ENCODE measurements at regions of chr12 and their contacts with region 1.

Region 1: GRCh38 chr12:119444456-119445044 is 110.0 kb downstream of the CCDC60 start:
- DNase-seq: peak; percentile 77
- ATAC-seq: peak; percentile 75
- H3K4me3 ChIP-seq: no peak overlapping the region
- H3K27ac ChIP-seq: no peak overlapping the region
- H3K4me1 ChIP-seq: no peaks in the 10 kb centered on the region
- H3K27me3 ChIP-seq: peaks cover 7% of the 10 kb centered on the region; the same call in 1 of the 2 replicates
- CTCF ChIP-seq: peak; percentile 93

Region 2: DNA sequence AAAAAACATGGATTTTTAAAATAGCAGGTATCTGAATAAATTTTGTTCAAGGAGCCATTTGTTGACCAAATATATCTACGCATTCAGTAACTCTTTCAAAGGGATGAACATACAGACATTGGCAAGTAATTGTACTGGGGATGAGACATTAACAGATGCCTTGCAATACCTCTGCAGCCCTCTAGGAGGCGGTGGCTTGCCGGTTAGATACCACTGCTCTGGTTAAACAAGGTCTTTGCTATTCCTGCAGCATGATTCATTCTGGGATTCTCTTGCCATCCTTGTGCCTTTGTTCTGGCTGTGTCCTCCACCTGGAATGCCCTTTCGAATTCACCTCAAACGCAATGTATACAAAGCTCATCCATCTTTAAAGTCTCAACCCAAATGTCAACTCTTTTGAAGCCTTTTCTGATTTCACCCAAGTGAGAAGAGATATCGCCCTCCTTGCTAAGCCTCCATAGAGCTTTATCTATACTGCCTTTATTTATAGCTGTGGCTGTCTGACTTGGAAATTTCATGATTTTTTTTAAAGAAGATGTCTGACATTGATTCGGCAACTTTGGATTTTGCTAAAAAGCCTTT is 594.2 kb before region 1 on chr12:
- CTCF ChIA-PET with region 1: no interaction called
- POLR2A ChIA-PET with region 1: no interaction called
- in situ Hi-C with region 1: no loop called
- intact Hi-C with region 1: no loop called
- DNase-seq: no peak
- ATAC-seq: no peak
- H3K4me3 ChIP-seq: no peak overlapping the region
- H3K27ac ChIP-seq: no peak overlapping the region
- H3K4me1 ChIP-seq: no peaks in the 10 kb centered on the region
- H3K27me3 ChIP-seq: no peaks in the 10 kb centered on the region; the same call in 1 of the 2 replicates
- CTCF ChIP-seq: peak; percentile 81

Region 3: GRCh38 chr12:119308708-119309456 is 135.7 kb before region 1 on chr12:
- CTCF ChIA-PET with region 1: no interaction called
- POLR2A ChIA-PET with region 1: no interaction called
- in situ Hi-C with region 1: no loop called
- intact Hi-C with region 1: no loop called
- DNase-seq: no peak
- ATAC-seq: no peak
- H3K4me3 ChIP-seq: no peak overlapping the region
- H3K27ac ChIP-seq: no peak overlapping the region
- H3K4me1 ChIP-seq: no peaks in the 10 kb centered on the region
- H3K27me3 ChIP-seq: no peaks in the 10 kb centered on the region
- CTCF ChIP-seq: no peak

Region 4: DNA sequence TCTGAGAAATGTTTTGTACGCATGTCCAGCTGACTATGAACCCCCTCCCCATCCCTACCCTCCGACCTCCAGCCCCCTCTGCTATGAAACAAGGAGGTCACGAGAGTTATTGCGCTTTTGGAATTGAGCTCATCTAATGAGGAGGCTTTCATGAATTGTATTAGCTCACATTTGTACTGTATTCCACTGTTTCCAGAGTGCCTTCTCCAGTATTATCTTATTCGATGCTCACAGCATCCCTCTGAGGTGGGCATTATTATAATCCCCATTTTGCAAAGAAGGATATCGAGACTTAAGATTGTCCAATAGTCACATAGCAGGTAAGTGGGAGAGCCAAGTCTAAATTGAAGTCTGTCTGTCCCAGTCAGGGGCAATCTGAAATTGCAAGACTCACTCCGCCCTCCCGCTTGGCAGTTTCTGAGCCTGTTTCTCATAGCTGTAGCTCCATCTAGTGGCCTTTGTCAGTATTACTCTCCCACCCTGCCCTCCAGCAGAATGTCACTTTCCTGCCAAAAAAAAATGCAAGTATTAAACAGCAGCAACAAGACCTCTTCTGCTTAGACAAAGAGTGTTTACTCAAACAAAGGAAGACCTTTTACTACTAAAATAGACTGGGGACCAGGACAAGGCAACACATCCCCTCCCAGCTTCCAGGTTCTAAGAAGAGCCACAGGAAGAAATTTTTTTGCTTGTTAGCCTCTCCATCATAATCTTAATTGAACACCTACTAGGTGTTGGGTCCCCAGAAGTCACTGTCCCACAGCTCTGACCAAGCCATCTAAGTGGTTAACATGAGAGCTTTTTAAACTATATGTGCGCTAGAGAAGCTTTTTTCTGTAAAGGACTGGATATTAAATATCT is 100.4 kb after region 1 on chr12:
- CTCF ChIA-PET with region 1: interaction called, 6 read pairs
- POLR2A ChIA-PET with region 1: interaction called, 3 read pairs
- in situ Hi-C with region 1: no loop called
- intact Hi-C with region 1: loop called (anchors 1 kb)
- DNase-seq: peak; percentile 59
- ATAC-seq: peak; percentile 93
- H3K4me3 ChIP-seq: no peak overlapping the region
- H3K27ac ChIP-seq: no peak overlapping the region
- H3K4me1 ChIP-seq: no peaks in the 10 kb centered on the region
- H3K27me3 ChIP-seq: 0 out of 2 replicates have a peak, but pooled peaks cover 4% of the 10 kb centered on the region
- CTCF ChIP-seq: peak; percentile 85

Region 5: DNA sequence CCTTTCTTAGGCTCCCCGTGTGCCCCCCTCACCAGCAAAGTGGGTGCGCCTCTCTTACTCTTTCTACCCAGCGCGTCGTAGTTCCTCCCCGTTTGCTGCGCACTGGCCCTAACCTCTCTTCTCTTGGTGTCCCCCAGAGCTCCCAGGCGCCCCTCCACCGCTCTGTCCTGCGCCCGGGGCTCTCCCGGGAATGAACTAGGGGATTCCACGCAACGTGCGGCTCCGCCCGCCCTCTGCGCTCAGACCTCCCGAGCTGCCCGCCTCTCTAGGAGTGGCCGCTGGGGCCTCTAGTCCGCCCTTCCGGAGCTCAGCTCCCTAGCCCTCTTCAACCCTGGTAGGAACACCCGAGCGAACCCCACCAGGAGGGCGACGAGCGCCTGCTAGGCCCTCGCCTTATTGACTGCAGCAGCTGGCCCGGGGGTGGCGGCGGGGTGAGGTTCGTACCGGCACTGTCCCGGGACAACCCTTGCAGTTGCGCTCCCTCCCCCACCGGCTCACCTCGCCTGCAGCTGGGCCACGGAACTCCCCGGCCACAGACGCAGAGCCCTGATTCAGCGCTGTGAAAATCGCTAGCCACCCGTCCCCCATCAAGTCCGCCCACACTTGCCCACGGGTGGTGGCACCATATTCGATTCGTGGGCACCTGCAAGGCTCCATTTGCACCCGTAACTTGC is 150.4 kb after region 1 on chr12:
- CTCF ChIA-PET with region 1: no interaction called
- POLR2A ChIA-PET with region 1: no interaction called
- in situ Hi-C with region 1: no loop called
- intact Hi-C with region 1: no loop called
- DNase-seq: no peak
- ATAC-seq: peak; percentile 84
- H3K4me3 ChIP-seq: peak overlapping the region; percentile 38 to 59
- H3K27ac ChIP-seq: no peak overlapping the region
- H3K4me1 ChIP-seq: peaks cover 8% of the 10 kb centered on the region; the same call in 1 of the 2 replicates
- H3K27me3 ChIP-seq: peaks cover 48% of the 10 kb centered on the region
- CTCF ChIP-seq: no peak

Region 6: GRCh38 chr12:119652665-119653064 is 208.1 kb after region 1 on chr12:
- CTCF ChIA-PET with region 1: no interaction called
- POLR2A ChIA-PET with region 1: no interaction called
- in situ Hi-C with region 1: no loop called
- intact Hi-C with region 1: loop called (anchors 5 kb)
- DNase-seq: no peak
- ATAC-seq: no peak
- H3K4me3 ChIP-seq: no peak overlapping the region
- H3K27ac ChIP-seq: no peak overlapping the region
- H3K4me1 ChIP-seq: no peaks in the 10 kb centered on the region
- H3K27me3 ChIP-seq: peaks cover 2% of the 10 kb centered on the region; the same call in 1 of the 2 replicates
- CTCF ChIP-seq: no peak

Region 7: DNA sequence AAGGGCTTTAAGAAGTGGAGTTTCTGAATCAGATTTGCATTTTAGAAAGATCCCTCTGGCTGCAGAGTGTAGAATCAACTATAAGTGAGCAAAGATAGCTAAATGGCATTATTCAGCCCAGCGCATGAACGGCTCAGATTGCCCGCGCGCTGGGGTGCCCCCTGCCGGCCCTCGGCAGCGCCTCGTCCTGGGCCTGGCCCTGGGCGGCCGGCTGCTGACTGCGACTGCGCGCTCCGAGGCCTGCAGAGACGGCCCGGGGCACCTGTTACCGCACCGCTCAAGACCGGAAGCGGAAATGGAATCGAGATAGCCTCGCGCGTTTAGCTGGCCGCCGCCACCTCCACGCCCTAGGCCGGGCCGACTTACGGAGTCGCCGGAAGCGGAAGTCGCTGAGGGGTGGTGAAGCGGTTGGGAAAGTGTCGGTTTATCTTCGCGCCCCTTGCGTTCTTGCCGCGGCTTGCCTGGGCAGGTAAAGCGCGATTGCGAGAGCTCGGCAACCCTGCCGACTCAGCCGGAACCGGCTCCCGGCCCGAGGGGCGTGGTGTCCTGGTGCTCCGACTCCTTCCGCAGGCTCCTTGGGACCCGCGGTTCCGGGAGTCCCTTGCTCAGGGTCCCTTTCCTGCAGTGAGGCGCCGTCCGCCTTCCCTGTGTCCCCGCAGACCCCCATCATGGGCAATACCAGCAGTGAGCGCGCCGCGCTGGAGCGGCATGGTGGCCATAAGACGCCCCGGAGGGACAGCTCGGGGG is 223.2 kb after region 1 on chr12 and contains the start of gene PRKAB1:
- CTCF ChIA-PET with region 1: interaction called, 10 read pairs
- POLR2A ChIA-PET with region 1: no interaction called
- in situ Hi-C with region 1: no loop called
- intact Hi-C with region 1: no loop called
- DNase-seq: peak; percentile 74
- ATAC-seq: peak; percentile 99
- H3K4me3 ChIP-seq: peak within 1 kb of the TSS; percentile 77 to 99
- H3K27ac ChIP-seq: peak within 1 kb of the TSS; percentile 98
- H3K4me1 ChIP-seq: peaks cover 15% of the 10 kb centered on the region
- H3K27me3 ChIP-seq: no peaks in the 10 kb centered on the region
- CTCF ChIP-seq: peak; percentile 99
- total RNA-seq, gene PRKAB1: 36.3 TPM